ENCODE measurements at regions of chr15 and their contacts with region 1.

Region 1: DNA sequence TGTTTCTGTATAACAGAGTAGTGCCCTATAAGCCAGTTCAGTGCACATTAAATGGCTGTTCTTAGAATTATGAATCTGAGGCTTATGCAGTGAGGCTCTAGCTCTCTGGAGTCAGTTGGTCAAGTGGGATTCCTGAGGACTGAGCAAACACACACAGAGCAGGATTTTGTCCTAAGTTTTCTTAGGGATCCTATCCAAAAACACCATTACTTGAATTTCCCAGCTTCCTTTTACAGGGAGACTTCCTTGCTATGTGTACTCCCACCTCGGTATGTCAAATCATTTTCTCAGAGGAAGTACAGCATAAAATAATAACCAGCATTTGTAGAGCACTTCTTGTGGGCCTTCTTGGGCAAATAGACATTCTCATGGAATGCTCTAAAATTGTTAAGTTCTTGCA is 63.1 kb upstream of the GOLGA6B start:
- DNase-seq: no peak
- H3K4me3 ChIP-seq: no peak overlapping the region
- H3K27ac ChIP-seq: no peak overlapping the region
- H3K4me1 ChIP-seq: no peaks in the 10 kb centered on the region
- H3K27me3 ChIP-seq: no peaks in the 10 kb centered on the region
- CTCF ChIP-seq: no peak
- POLR2A ChIP-seq: no peak

Region 2: GRCh38 chr15:72515591-72516389 is 75.6 kb before region 1 on chr15:
- intact Hi-C with region 1: loop called (anchors 5 kb)
- DNase-seq: no peak
- H3K4me3 ChIP-seq: no peak overlapping the region
- H3K27ac ChIP-seq: no peak overlapping the region
- H3K4me1 ChIP-seq: peaks cover 43% of the 10 kb centered on the region
- H3K27me3 ChIP-seq: no peaks in the 10 kb centered on the region
- CTCF ChIP-seq: no peak
- POLR2A ChIP-seq: no peak

Region 3: GRCh38 chr15:72961346-72961745 is 370.0 kb after region 1 on chr15:
- intact Hi-C with region 1: no loop called
- DNase-seq: no peak
- H3K4me3 ChIP-seq: no peak overlapping the region
- H3K27ac ChIP-seq: no peak overlapping the region
- H3K4me1 ChIP-seq: no peaks in the 10 kb centered on the region
- H3K27me3 ChIP-seq: no peaks in the 10 kb centered on the region
- CTCF ChIP-seq: no peak
- POLR2A ChIP-seq: no peak